ENCODE measurements at regions of chr5 and their contacts with region 1.

Region 1: DNA sequence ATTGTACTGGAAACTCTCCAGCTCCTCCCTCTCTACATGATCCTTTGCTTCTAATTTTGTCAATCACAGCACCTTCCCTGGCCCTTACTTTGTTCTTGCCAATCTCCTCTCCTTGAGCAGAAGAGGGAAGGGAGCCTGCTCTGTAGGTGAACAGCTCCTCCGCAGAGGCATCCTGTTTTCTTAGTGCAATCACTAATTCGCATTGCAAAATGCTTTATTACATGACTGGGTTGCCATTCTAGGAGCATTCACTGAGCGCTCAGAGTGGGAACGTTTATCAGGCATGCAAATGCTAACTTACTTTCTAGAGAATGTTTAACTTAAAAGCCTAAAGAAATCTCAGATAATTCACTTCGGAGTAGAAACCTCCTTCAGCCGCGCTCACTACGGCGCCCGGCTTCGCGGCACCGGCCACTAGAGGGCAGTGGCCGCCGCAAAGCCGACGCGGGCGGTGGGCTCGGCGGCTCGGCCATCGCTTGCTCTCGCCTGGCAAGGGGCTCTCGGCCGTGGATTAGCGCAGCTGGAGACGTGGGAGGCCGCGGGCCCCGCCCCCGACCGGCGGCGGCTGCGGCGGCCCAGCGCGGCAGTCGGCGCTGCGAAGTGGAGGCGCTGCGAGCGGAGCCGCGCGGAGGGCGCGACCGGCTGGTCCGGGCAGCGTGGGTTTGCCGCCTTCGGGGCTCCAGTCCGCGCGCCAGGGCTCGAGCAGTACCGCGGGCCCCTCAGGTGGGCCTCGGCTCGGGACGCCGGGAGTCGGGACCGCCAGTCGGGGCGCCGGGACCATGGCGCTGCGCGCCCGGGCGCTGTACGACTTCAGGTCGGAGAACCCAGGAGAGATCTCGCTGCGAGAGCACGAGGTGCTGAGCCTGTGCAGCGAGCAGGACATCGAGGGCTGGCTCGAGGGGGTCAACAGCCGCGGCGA is at the start of gene SNX18:
- DNase-seq: peak; percentile 95
- ATAC-seq: peak; percentile 92
- total RNA-seq, gene SNX18: 24.9 TPM

Region 2: DNA sequence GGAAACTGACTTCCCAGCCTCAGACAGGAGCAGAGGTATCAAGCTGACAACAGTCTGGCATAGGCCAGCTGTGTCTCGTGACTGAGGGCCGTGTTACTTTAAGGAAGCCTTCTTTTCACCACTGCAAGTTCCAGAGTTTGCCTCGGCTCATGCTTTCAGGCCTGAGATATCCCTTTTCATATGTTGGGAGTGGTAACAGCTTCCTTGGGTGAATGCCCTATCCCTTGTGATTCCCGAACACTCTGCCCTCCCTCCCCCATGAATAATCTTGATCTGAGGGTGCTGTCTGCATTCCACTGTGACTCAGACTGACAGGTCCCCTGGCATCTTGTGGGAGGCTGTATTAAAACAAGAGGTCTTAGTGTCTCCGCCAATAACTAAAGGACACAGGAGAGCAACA is 157.3 kb before region 1 on chr5:
- intact Hi-C with region 1: no loop called
- DNase-seq: no peak
- ATAC-seq: peak; percentile 17

Region 3: GRCh38 chr5:54580997-54581811 is 63.8 kb after region 1 on chr5:
- intact Hi-C with region 1: loop called (anchors 5 kb)
- DNase-seq: no peak
- ATAC-seq: peak; percentile 47

Region 4: GRCh38 chr5:54696931-54697330 is 179.5 kb after region 1 on chr5:
- intact Hi-C with region 1: no loop called
- DNase-seq: peak; percentile 41
- ATAC-seq: no peak

Region 5: DNA sequence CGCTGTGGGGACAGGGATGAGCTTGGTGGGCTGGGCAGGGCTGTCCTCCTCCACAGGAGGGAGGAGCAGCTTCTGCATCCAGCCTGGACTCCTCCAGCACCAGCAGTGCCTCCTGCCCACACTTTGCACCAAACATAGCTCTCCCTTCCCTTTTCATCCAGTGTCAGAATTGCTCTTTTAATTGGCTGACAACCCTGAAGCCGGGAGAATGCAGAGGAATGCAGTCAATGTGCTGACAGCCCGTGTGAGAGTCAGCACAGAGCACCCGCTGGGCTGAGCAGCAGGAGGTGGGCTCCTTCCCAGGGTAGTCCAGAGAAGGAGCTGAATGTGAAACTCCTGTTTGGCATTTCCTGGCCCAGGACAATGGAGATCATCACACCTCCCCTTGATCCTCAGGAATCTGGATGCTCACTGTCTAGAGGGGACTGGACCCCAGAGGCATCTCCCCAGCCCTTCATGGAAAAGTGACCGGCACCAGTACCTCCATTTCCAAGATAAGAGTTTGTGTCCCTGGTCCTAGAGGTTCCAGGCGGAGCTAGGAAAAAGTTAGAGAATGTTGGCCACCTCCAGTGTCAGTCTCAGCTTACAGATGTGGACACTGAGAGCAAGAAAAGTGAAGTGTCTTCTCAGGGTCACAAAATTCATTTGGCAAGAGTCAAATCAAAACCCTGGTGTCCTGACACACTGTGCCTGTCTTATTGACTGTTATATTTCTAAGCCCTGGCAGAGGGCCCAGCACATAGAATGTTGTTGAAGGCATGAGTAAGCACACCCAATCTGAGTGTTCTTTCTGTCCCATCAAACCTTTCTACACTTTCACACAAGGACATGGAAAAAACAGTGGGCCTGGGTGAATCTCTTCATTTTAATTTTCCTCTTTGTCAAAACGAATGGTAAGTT is 202.2 kb after region 1 on chr5:
- intact Hi-C with region 1: loop called (anchors 10 kb)
- DNase-seq: peak; percentile 65
- ATAC-seq: peak; percentile 89

Region 6: GRCh38 chr5:54743997-54744788 is 226.8 kb after region 1 on chr5:
- intact Hi-C with region 1: loop called (anchors 10 kb)
- DNase-seq: no peak
- ATAC-seq: peak; percentile 64

Region 7: GRCh38 chr5:54844905-54845566 is 327.6 kb after region 1 on chr5:
- intact Hi-C with region 1: loop called (anchors 2 kb)
- DNase-seq: no peak
- ATAC-seq: peak; percentile 74

Region 8: GRCh38 chr5:54868511-54869483 is 351.4 kb after region 1 on chr5:
- intact Hi-C with region 1: loop called (anchors 2 kb)
- DNase-seq: no peak
- ATAC-seq: no peak

Measured in Right ventricle myocardium superior (tissue), 1 donor.